ENCODE measurements at regions of chr1 and their contacts with region 1.

Region 1: GRCh38 chr1:160850993-160851392 is 11.7 kb downstream of the CD244 start:
- DNase-seq: no peak
- ATAC-seq: no peak
- H3K4me3 ChIP-seq: no peak overlapping the region
- H3K4me3 Mint-ChIP-seq: peak overlapping the region; percentile 68
- H3K27ac ChIP-seq: peak overlapping the region; percentile 48
- H3K27ac Mint-ChIP-seq: no peak overlapping the region
- H3K4me1 ChIP-seq: peaks cover 65% of the 10 kb centered on the region
- H3K4me1 Mint-ChIP-seq: peaks cover 52 to 65% of the 10 kb centered on the region in 2 donors
- H3K27me3 ChIP-seq: no peaks in the 10 kb centered on the region
- H3K27me3 Mint-ChIP-seq: no peaks in the 10 kb centered on the region
- CTCF ChIP-seq: no peak

Region 2: DNA sequence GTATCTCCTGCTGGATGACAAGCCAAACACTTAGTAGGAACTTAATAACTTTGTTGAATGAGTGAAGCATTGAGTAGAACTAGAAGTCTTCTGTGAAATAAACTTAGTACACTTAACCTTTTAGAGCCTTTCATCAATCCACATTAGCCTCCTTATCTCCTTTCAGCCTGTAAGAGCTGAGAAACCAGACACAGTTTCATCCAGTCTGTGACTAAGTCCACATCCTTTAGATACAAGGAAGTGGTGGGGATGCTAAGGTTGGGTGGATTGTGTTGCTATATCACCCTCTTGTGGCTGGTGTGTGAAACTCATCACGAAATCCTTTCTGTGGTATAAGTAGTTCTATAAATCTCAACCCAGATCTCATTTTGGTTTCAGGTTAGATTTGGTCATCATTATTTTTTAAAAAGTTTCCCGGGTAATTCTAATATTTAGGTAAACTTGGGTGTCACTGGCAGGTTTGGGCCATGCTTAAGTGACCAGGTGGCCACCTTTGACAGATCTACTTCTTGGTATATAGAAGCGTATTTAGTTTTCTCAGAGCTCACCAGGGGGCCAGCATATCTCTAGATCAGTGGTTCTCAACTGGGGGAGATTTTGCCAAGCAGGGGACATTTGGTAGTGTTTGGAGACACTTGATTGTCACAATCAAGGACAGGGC is 243.9 kb before region 1 on chr1:
- intact Hi-C with region 1: no loop called
- DNase-seq: peak; percentile 28 to 91
- ATAC-seq: peak; percentile 99 to 100 (median 100)
- H3K4me3 ChIP-seq: no peak overlapping the region
- H3K4me3 Mint-ChIP-seq: no peak overlapping the region
- H3K27ac ChIP-seq: peak overlapping the region; percentile 11
- H3K27ac Mint-ChIP-seq: peak overlapping the region; percentile 82 to 84
- H3K4me1 ChIP-seq: peaks cover 12% of the 10 kb centered on the region
- H3K4me1 Mint-ChIP-seq: peaks cover 11 to 12% of the 10 kb centered on the region in 2 donors
- H3K27me3 ChIP-seq: no peaks in the 10 kb centered on the region
- H3K27me3 Mint-ChIP-seq: peaks cover 0 to 3% of the 10 kb centered on the region in 2 donors
- CTCF ChIP-seq: peak; percentile 78

Region 3: DNA sequence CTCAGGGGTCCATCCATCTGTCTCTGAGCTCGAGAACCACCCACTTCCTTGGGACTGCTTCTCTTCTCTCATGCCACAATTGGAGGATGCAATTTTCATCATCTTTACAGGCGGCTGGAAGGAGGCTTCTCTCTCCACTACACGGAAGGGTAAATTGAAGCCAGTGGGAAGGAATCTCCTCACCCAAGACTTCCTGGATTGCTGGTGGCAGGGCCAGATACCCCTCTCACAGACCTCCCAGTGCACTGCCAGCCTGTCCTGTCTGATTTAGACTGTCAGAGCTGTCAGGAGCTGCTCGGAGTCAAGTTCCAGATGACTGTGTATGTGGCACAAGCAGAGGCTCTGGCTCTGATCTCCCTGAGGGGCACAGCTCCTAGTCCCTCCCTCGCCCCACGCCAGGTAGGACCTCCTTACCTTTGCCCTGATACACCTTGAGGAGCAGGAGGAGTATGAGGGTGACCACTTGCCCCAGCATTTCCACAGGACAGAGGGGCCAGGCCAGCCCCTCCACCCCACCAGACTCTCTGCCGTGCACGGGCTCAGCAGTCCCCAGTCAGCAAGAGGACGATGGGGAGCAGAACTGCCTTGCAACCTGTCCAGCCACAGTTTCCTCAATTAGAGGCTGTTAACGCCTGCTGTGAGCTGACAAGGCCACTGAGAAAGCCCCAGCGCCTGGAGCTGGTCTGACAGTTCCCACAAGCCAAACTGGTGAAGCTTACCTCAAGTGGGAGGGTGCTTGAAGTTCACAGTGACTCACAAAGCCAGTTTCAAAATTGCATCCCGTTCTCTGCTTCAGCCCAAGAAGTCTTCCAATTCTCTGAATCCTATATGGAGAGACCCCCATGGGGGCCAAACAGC is 11.4 kb after region 1 on chr1 and contains the start of gene CD244:
- intact Hi-C with region 1: loop called (anchors 1 kb)
- DNase-seq: peak; percentile 79 to 81
- ATAC-seq: peak; percentile 88 to 97 (median 95)
- H3K4me3 ChIP-seq: peak within 1 kb of the TSS; percentile 66
- H3K4me3 Mint-ChIP-seq: peak within 1 kb of the TSS; percentile 97
- H3K27ac ChIP-seq: peak within 1 kb of the TSS; percentile 74
- H3K27ac Mint-ChIP-seq: peak within 1 kb of the TSS in 1 of 2 donors; percentile 93
- H3K4me1 ChIP-seq: peaks cover 65% of the 10 kb centered on the region
- H3K4me1 Mint-ChIP-seq: peaks cover 54 to 64% of the 10 kb centered on the region in 2 donors
- H3K27me3 ChIP-seq: no peaks in the 10 kb centered on the region
- H3K27me3 Mint-ChIP-seq: no peaks in the 10 kb centered on the region
- CTCF ChIP-seq: no peak
- total RNA-seq, gene CD244: 131 to 193 (median 150) TPM